B cell (primary cell): ENCODE measurements at regions of chr1 and their contacts with region 1.

Region 1: DNA sequence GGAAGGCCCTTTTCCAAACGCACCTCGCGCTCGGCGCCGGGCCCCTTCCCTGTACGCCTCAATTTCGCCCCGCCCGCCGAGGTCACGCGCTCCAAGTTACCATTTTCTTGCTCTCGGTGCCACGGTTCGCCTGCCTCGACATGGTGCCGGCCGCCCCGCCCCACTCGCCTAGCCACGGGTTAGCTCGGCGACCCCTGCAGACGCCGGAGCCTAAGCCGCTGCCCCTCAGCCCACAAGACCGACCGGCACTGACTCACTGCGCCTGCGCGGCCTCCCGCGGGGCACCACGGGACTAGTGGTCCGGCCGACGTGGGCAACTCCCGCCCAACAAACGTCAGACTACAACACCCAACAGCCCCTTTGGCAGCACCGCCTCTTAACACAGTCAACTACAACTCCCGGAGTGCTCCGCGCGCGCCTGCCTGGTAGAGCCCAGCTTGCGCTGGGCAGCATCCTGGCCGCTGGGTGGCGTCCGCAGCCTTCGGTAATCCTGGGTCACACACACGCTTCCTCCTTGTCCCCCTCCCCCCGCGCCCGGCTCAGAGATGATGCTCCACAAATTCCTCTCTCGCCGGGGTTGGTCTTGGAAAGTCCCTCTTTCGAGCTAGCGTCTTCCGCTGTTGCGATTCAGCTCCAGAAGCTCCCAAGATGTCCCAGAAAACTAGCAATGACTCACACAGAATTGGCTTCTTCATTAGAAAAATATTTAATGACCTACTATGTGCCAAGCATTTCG is at the start of gene TRAPPC3:
- DNase-seq: peak; percentile 99
- ATAC-seq: peak; percentile 93
- H3K4me3 ChIP-seq: peak within 1 kb of the TSS; percentile 74 to 84 (median 83)
- H3K4me3 Mint-ChIP-seq: peak within 1 kb of the TSS; percentile 99
- H3K27ac ChIP-seq: peak within 1 kb of the TSS; percentile 77 to 94
- H3K27ac Mint-ChIP-seq: peak within 1 kb of the TSS; percentile 98
- H3K4me1 ChIP-seq: peaks cover 32 to 41% of the 10 kb centered on the region in 2 donors
- H3K4me1 Mint-ChIP-seq: peaks cover 63% of the 10 kb centered on the region
- H3K27me3 ChIP-seq: no peaks in the 10 kb centered on the region
- H3K27me3 Mint-ChIP-seq: no peaks in the 10 kb centered on the region
- CTCF ChIP-seq: peak; percentile 89
- total RNA-seq, gene TRAPPC3: 42.1 and 45.2 TPM in 2 replicates

Region 2: GRCh38 chr1:36088575-36089443 is 60.6 kb before region 1 on chr1 and contains the start of gene ADPRS:
- CTCF ChIA-PET with region 1: interaction called, 7 read pairs
- POLR2A ChIA-PET with region 1: interaction called, 3 read pairs
- intact Hi-C with region 1: loop called (anchors 1 kb)
- DNase-seq: peak; percentile 95
- ATAC-seq: peak; percentile 88
- H3K4me3 ChIP-seq: peak within 1 kb of the TSS; percentile 79 to 98 (median 84)
- H3K4me3 Mint-ChIP-seq: peak within 1 kb of the TSS; percentile 97
- H3K27ac ChIP-seq: peak within 1 kb of the TSS; percentile 78 to 92
- H3K27ac Mint-ChIP-seq: peak within 1 kb of the TSS; percentile 94
- H3K4me1 ChIP-seq: peaks cover 22 to 28% of the 10 kb centered on the region in 2 donors
- H3K4me1 Mint-ChIP-seq: peaks cover 22% of the 10 kb centered on the region
- H3K27me3 ChIP-seq: peaks cover 0 to 18% (median 9%) of the 10 kb centered on the region in 4 experiments
- H3K27me3 Mint-ChIP-seq: peaks cover 16% of the 10 kb centered on the region
- CTCF ChIP-seq: peak; percentile 97
- total RNA-seq, gene ADPRS: 20.9 and 24.0 TPM in 2 replicates

Region 3: DNA sequence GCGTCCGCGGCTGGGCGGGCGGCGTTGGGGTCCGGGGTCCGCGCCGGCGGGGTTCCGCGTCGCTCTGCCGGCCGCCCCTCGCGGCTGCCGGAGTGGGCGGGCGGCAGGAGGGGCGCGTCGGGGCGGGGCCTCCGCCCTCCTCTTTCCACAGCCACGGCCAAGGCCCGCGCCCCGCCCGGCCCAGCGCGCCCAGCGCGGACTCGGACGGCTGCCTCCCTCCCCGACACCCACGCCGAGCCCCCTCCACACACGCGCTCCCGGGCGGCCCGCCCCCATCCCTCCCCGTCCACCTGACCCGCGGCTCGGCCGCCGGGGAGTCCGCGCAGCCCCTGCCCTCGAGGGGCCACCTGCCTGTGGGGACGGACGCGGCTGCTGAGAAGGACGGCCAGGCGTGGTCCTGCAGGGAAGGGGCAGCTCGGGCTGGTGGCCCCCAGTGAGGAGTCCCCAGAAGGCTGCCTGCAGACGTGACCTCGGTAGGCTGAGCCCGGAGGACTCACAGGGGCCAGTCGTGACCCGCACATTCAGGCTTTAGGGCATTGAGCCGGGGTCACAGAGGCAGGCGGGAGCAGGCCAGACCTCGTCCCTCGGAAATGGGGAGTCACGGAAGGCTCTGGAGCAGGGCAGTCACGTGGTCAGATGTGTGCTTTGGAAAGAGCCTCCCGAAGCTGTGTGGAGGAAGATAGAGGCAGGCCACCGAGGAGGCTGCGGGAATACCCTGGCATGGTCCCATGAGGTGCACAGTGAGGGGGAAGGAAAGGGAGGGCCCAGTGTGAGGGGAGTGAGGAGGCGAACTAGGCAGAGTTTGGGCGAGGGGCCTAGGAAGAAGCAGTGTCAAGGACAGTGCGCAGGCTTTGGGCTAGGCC is 24.0 kb before region 1 on chr1 and contains the start of gene COL8A2:
- CTCF ChIA-PET with region 1: no interaction called
- POLR2A ChIA-PET with region 1: no interaction called
- intact Hi-C with region 1: no loop called
- DNase-seq: peak; percentile 31
- ATAC-seq: peak; percentile 35
- H3K4me3 ChIP-seq: peak within 1 kb of the TSS in 3 of 5 experiments; percentile 8 to 45 (median 28)
- H3K4me3 Mint-ChIP-seq: peak within 1 kb of the TSS; percentile 74
- H3K27ac ChIP-seq: no peak within 1 kb of the TSS
- H3K27ac Mint-ChIP-seq: no peak within 1 kb of the TSS
- H3K4me1 ChIP-seq: peaks cover 28% of the 10 kb centered on the region in 2 donors
- H3K4me1 Mint-ChIP-seq: peaks cover 32% of the 10 kb centered on the region
- H3K27me3 ChIP-seq: peaks cover 0 to 22% (median 2%) of the 10 kb centered on the region in 4 experiments
- H3K27me3 Mint-ChIP-seq: peaks cover 8% of the 10 kb centered on the region
- CTCF ChIP-seq: no peak
- total RNA-seq, gene COL8A2: 0.17 TPM in 2 replicates

Region 4: DNA sequence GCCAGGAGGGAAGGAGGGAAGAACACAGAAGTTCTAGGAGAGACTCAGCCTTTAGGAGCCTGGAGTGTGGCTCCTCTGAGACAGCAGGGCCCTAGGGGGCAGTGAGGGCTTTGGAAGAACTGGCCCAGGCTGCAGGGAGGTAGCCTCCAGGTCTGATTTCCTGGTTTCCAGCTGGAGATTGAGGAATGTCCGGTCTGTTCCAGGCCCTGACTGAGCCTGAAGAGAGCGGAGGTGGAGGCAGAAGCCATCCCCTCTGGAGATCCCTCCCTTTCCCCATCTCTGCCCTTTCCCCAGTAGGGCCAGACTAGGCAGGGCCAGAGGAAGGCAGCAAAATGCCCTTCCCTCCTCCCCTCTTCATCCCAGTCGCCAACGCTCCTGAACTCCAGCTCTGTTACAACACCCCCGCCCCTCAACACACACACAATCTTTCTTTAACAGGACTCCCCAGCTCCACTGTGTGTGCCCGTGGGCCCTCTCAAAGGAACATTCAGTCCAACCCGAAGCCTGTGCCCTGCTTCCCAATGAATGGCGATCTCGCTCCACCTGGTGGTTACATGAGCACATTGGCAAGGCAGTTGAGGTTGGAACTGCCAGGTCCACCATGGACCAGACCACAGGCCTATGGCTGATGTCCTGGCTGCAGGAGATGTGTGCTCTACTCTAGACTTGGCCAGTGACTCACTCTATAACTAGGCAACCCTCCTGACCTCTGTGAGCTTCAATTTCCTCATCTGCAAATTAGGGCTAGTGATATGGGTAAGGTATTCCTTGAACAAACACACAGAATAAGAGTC is 38.6 kb after region 1 on chr1:
- CTCF ChIA-PET with region 1: interaction called, 187 read pairs
- POLR2A ChIA-PET with region 1: interaction called, 27 read pairs
- intact Hi-C with region 1: loop called (anchors 1 kb)
- DNase-seq: peak; percentile 87
- ATAC-seq: peak; percentile 98
- H3K4me3 ChIP-seq: no peak overlapping the region
- H3K4me3 Mint-ChIP-seq: no peak overlapping the region
- H3K27ac ChIP-seq: no peak overlapping the region
- H3K27ac Mint-ChIP-seq: peak overlapping the region; percentile 16
- H3K4me1 ChIP-seq: peaks cover 0 to 4% of the 10 kb centered on the region in 2 donors
- H3K4me1 Mint-ChIP-seq: peaks cover 3% of the 10 kb centered on the region
- H3K27me3 ChIP-seq: no peaks in the 10 kb centered on the region
- H3K27me3 Mint-ChIP-seq: no peaks in the 10 kb centered on the region
- CTCF ChIP-seq: peak; percentile 82

Region 5: DNA sequence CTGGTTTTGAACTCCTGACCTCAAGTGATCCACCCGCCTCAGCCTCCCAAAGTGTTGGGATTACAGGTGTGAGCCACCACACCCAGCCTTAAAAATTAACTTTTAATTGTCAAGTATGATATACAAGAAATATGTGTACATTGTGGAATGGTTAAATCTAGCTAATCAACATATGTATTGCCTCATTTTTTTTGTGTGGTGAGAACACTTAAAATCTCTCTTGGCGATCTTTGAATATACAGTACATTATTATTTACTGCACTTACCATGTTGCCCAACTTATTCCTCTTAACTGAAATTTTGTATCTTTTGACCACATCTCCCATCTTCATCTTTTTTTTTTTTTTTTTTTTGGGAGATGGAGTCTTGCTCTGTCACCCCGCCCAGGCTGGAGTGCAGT is 98.1 kb after region 1 on chr1:
- CTCF ChIA-PET with region 1: no interaction called
- POLR2A ChIA-PET with region 1: no interaction called
- intact Hi-C with region 1: no loop called
- DNase-seq: no peak
- ATAC-seq: no peak
- H3K4me3 ChIP-seq: no peak overlapping the region
- H3K4me3 Mint-ChIP-seq: no peak overlapping the region
- H3K27ac ChIP-seq: no peak overlapping the region
- H3K27ac Mint-ChIP-seq: no peak overlapping the region
- H3K4me1 ChIP-seq: peaks cover 3 to 24% of the 10 kb centered on the region in 2 donors
- H3K4me1 Mint-ChIP-seq: peaks cover 45% of the 10 kb centered on the region
- H3K27me3 ChIP-seq: no peaks in the 10 kb centered on the region
- H3K27me3 Mint-ChIP-seq: no peaks in the 10 kb centered on the region
- CTCF ChIP-seq: no peak

Region 6: GRCh38 chr1:36285448-36286101 is 136.2 kb after region 1 on chr1:
- CTCF ChIA-PET with region 1: interaction called, 135 read pairs
- POLR2A ChIA-PET with region 1: interaction called, 7 read pairs
- intact Hi-C with region 1: loop called (anchors 1 kb)
- DNase-seq: peak; percentile 89
- ATAC-seq: peak; percentile 92
- H3K4me3 ChIP-seq: no peak overlapping the region
- H3K4me3 Mint-ChIP-seq: no peak overlapping the region
- H3K27ac ChIP-seq: peak overlapping the region in 1 of 2 donors; percentile 34
- H3K27ac Mint-ChIP-seq: peak overlapping the region; percentile 83
- H3K4me1 ChIP-seq: no peaks in the 10 kb centered on the region
- H3K4me1 Mint-ChIP-seq: peaks cover 8% of the 10 kb centered on the region
- H3K27me3 ChIP-seq: no peaks in the 10 kb centered on the region
- H3K27me3 Mint-ChIP-seq: no peaks in the 10 kb centered on the region
- CTCF ChIP-seq: peak; percentile 84

Region 7: GRCh38 chr1:36342481-36343478 is 193.4 kb after region 1 on chr1:
- CTCF ChIA-PET with region 1: interaction called, 10 read pairs
- POLR2A ChIA-PET with region 1: no interaction called
- intact Hi-C with region 1: no loop called
- DNase-seq: peak; percentile 71
- ATAC-seq: peak; percentile 76
- H3K4me3 ChIP-seq: no peak overlapping the region
- H3K4me3 Mint-ChIP-seq: no peak overlapping the region
- H3K27ac ChIP-seq: no peak overlapping the region
- H3K27ac Mint-ChIP-seq: no peak overlapping the region
- H3K4me1 ChIP-seq: peaks cover 0 to 5% of the 10 kb centered on the region in 2 donors
- H3K4me1 Mint-ChIP-seq: peaks cover 10% of the 10 kb centered on the region
- H3K27me3 ChIP-seq: no peaks in the 10 kb centered on the region
- H3K27me3 Mint-ChIP-seq: no peaks in the 10 kb centered on the region
- CTCF ChIP-seq: peak; percentile 68

Region 8: GRCh38 chr1:36420836-36421664 is 271.6 kb after region 1 on chr1:
- CTCF ChIA-PET with region 1: interaction called, 19 read pairs
- POLR2A ChIA-PET with region 1: no interaction called
- intact Hi-C with region 1: loop called (anchors 1 kb)
- DNase-seq: peak; percentile 88
- ATAC-seq: peak; percentile 100
- H3K4me3 ChIP-seq: no peak overlapping the region
- H3K4me3 Mint-ChIP-seq: no peak overlapping the region
- H3K27ac ChIP-seq: no peak overlapping the region
- H3K27ac Mint-ChIP-seq: peak overlapping the region; percentile 37
- H3K4me1 ChIP-seq: peaks cover 4 to 5% of the 10 kb centered on the region in 2 donors
- H3K4me1 Mint-ChIP-seq: peaks cover 8% of the 10 kb centered on the region
- H3K27me3 ChIP-seq: no peaks in the 10 kb centered on the region
- H3K27me3 Mint-ChIP-seq: no peaks in the 10 kb centered on the region
- CTCF ChIP-seq: peak; percentile 97